Psoas muscle (tissue), 8 donors: ENCODE measurements at regions of chr3 and their contacts with region 1.

Region 1: GRCh38 chr3:8482960-8483665 is 18.5 kb upstream of the LMCD1 start:
- DNase-seq: peak; percentile 73 to 82
- ATAC-seq: peak; percentile 95 to 98 (median 98)
- H3K4me3 ChIP-seq: no peak overlapping the region
- H3K27ac ChIP-seq: peak overlapping the region; percentile 65
- H3K4me1 ChIP-seq: peaks cover 36% of the 10 kb centered on the region
- H3K27me3 ChIP-seq: no peaks in the 10 kb centered on the region
- CTCF ChIP-seq: no peak

Region 2: GRCh38 chr3:8152821-8153418 is 330.2 kb before region 1 on chr3:
- intact Hi-C with region 1: no loop called
- DNase-seq: no peak
- ATAC-seq: no peak
- H3K4me3 ChIP-seq: no peak overlapping the region
- H3K27ac ChIP-seq: no peak overlapping the region
- H3K4me1 ChIP-seq: no peaks in the 10 kb centered on the region
- H3K27me3 ChIP-seq: no peaks in the 10 kb centered on the region
- CTCF ChIP-seq: no peak

Region 3: GRCh38 chr3:8607234-8608040 is 124.3 kb after region 1 on chr3:
- intact Hi-C with region 1: loop called in 1 of 2 experiments (anchors 5 kb)
- DNase-seq: peak; percentile 61 to 81
- ATAC-seq: peak; percentile 93 to 99 (median 96)
- H3K4me3 ChIP-seq: no peak overlapping the region
- H3K27ac ChIP-seq: no peak overlapping the region
- H3K4me1 ChIP-seq: peaks cover 10% of the 10 kb centered on the region
- H3K27me3 ChIP-seq: no peaks in the 10 kb centered on the region
- CTCF ChIP-seq: peak; percentile 80

Region 4: GRCh38 chr3:8622873-8623691 is 140.0 kb after region 1 on chr3:
- intact Hi-C with region 1: loop called in 1 of 2 experiments (anchors 5 kb)
- DNase-seq: peak; percentile 72 to 86
- ATAC-seq: peak; percentile 83 to 93 (median 86)
- H3K4me3 ChIP-seq: no peak overlapping the region
- H3K27ac ChIP-seq: no peak overlapping the region
- H3K4me1 ChIP-seq: peaks cover 7% of the 10 kb centered on the region
- H3K27me3 ChIP-seq: no peaks in the 10 kb centered on the region
- CTCF ChIP-seq: peak; percentile 93